ENCODE measurements at regions of chr11 and their contacts with region 1.

Region 1: GRCh38 chr11:94840209-94840608 is 72.1 kb downstream of the AMOTL1 start:
- DNase-seq: no peak
- H3K4me3 ChIP-seq: no peak overlapping the region
- H3K27ac ChIP-seq: peak overlapping the region in 2 of 4 donors; percentile 65 to 78
- H3K4me1 ChIP-seq: peaks cover 0 to 59% (median 43%) of the 10 kb centered on the region in 4 donors
- H3K27me3 ChIP-seq: no peaks in the 10 kb centered on the region
- CTCF ChIP-seq: no peak
- EP300 ChIP-seq: no peak
- POLR2A ChIP-seq: no peak

Region 2: DNA sequence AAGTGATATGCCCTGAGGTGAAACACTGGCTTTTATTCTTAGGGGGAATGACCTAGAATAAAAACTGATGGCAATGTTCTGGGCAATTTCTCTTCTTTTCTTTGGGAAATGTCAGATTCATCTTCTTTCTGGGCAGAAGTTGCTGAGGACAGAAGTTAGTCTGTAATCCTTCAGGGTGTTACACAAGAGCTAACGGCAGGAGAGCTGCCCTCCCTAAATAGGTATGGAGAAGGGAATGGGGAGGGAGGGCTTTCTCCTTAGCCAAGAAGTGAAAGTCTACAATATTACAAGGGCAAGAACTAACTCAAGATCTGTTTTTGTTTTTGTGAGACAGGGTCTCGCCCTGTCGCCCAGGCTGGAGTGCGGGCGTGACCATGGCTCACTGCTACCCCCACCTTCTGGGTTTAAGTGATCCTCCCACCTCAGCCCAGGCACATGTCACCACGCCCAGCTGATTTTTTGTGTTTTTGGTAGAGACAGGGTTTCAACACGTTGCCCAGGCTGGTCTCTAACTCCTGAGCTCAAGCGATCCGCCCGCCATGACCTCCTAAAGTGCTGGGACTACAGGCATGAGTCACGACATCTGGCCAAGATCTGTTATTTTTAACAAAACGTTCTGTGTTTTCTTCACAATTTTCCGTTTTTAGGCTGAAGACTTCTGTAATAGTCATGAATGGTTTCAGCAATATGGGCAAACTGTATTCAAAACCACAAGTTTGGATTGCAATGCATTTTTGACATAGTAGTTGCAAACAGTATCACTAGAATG is 265.8 kb before region 1 on chr11:
- intact Hi-C with region 1: no loop called
- DNase-seq: no peak
- H3K4me3 ChIP-seq: no peak overlapping the region
- H3K27ac ChIP-seq: peak overlapping the region in 3 of 4 donors; percentile 42 to 55 (median 47)
- H3K4me1 ChIP-seq: no peaks in the 10 kb centered on the region
- H3K27me3 ChIP-seq: no peaks in the 10 kb centered on the region
- CTCF ChIP-seq: no peak
- EP300 ChIP-seq: no peak
- POLR2A ChIP-seq: no peak

Region 3: DNA sequence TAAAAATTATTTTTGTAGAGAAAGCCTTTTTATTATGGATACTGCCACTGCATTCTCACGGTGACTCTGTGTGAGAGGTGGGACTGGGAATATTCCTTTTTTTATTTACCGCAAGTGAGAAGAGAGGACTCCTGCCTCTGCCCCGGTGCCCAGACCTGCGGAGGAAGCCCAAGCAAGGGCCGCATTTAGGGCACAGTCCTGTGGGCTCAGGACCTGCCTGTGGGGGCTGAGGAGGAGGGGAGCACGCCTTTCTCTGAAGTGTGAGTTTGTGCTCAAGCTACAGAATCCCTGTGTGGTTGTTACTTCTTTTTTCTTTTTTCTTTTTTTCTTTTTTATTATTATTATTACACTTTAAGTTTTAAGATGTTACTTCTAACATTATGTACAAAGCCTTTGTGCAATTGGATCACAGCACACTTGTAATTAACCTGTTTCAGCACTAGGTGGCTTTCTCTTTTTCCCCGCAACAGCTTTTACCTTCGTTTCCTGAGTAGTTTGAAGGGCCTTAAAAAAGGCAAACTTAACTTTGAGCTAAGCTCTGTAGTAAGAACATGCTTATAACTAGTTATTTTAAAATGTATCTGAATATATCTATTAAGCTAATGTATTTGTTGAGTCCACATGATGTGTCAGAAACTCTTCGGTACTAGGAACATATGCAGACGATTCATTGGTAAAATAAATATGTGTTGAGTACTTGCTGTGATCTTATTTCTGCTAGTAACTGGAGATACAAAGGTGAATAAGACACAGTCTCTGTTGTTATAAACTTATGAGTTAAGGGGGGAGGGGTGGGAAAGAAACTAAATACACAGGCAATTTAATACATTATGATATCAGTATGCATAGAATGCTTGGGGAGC is 53.7 kb before region 1 on chr11:
- intact Hi-C with region 1: loop called (anchors 5 kb)
- DNase-seq: no peak
- H3K4me3 ChIP-seq: no peak overlapping the region
- H3K27ac ChIP-seq: peak overlapping the region; percentile 12 to 55 (median 38)
- H3K4me1 ChIP-seq: peaks cover 0 to 98% (median 92%) of the 10 kb centered on the region in 4 donors
- H3K27me3 ChIP-seq: no peaks in the 10 kb centered on the region
- CTCF ChIP-seq: peak; percentile 34 to 60 (median 48)
- EP300 ChIP-seq: no peak
- POLR2A ChIP-seq: no peak